Activated CD8-positive, alpha-beta T cell treated with anti-CD3 and anti-CD28 coated beads for 36 hours (primary cell): ENCODE measurements at regions of chr14 and their contacts with region 1.

Region 1: GRCh38 chr14:30982533-30982932 is 42.9 kb upstream of the AP4S1 start:
- DNase-seq: no peak
- ATAC-seq: no peak
- H3K4me3 Mint-ChIP-seq: no peak overlapping the region
- H3K27ac Mint-ChIP-seq: no peak overlapping the region
- H3K4me1 Mint-ChIP-seq: peaks cover 11% of the 10 kb centered on the region
- H3K27me3 Mint-ChIP-seq: no peaks in the 10 kb centered on the region
- CTCF ChIP-seq: no peak

Region 2: GRCh38 chr14:31084385-31084784 is 101.9 kb after region 1 on chr14:
- CTCF ChIA-PET with region 1: interaction called, 53 read pairs
- POLR2A ChIA-PET with region 1: no interaction called
- intact Hi-C with region 1: loop called (anchors 1 kb)
- DNase-seq: no peak
- ATAC-seq: no peak
- H3K4me3 Mint-ChIP-seq: no peak overlapping the region
- H3K27ac Mint-ChIP-seq: no peak overlapping the region
- H3K4me1 Mint-ChIP-seq: no peaks in the 10 kb centered on the region
- H3K27me3 Mint-ChIP-seq: no peaks in the 10 kb centered on the region
- CTCF ChIP-seq: no peak